Activated naive CD4-positive, alpha-beta T cell treated with anti-CD3 and anti-CD28 coated beads for 36 hours (primary cell): ENCODE measurements at regions of chr12 and their contacts with region 1.

Region 1: GRCh38 chr12:43728117-43728516 is 30.5 kb downstream of the PUS7L start:
- DNase-seq: no peak
- H3K4me3 Mint-ChIP-seq: no peak overlapping the region
- H3K27ac Mint-ChIP-seq: no peak overlapping the region
- H3K4me1 Mint-ChIP-seq: peaks cover 13% of the 10 kb centered on the region
- H3K27me3 Mint-ChIP-seq: no peaks in the 10 kb centered on the region

Region 2: GRCh38 chr12:43444940-43445564 is 283.1 kb before region 1 on chr12:
- CTCF ChIA-PET with region 1: no interaction called
- intact Hi-C with region 1: loop called (anchors 2 kb)
- DNase-seq: peak; percentile 72
- H3K4me3 Mint-ChIP-seq: no peak overlapping the region
- H3K27ac Mint-ChIP-seq: no peak overlapping the region
- H3K4me1 Mint-ChIP-seq: no peaks in the 10 kb centered on the region
- H3K27me3 Mint-ChIP-seq: peaks cover 8% of the 10 kb centered on the region

Region 3: DNA sequence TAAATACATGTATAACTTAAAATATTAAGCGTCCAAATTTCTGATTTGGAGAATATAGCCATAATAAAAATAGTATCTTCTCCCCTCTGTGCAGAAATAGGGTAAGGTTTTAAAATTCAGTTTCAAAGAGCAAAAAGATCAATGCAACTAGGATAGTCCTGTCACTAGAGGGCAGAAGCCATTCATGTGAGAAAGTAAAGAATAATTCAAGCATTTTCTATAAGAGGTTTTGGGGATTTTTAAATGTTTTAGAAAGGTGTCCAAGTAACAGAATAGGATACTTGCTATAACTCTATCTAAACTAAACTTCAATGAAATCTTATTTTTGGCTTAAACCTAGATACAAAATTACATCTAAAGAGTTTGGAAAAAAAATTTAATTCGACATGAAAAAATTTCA is 226.4 kb before region 1 on chr12:
- CTCF ChIA-PET with region 1: no interaction called
- intact Hi-C with region 1: loop called (anchors 1 kb)
- DNase-seq: no peak
- H3K4me3 Mint-ChIP-seq: no peak overlapping the region
- H3K27ac Mint-ChIP-seq: no peak overlapping the region
- H3K4me1 Mint-ChIP-seq: no peaks in the 10 kb centered on the region
- H3K27me3 Mint-ChIP-seq: peaks cover 2% of the 10 kb centered on the region

Region 4: GRCh38 chr12:43766291-43766690 is 38.2 kb after region 1 on chr12:
- CTCF ChIA-PET with region 1: no interaction called
- intact Hi-C with region 1: no loop called
- DNase-seq: no peak
- H3K4me3 Mint-ChIP-seq: no peak overlapping the region
- H3K27ac Mint-ChIP-seq: no peak overlapping the region
- H3K4me1 Mint-ChIP-seq: peaks cover 31% of the 10 kb centered on the region
- H3K27me3 Mint-ChIP-seq: no peaks in the 10 kb centered on the region